Dendritic cell treated with granulocyte-macrophage colony-stimulating factor and Interleukin-4, amounts not matched to agents 40 ng/mL and 50 ng/mL, for 4 days (primary cell): ENCODE measurements at regions of chr2 and their contacts with region 1.

Region 1: DNA sequence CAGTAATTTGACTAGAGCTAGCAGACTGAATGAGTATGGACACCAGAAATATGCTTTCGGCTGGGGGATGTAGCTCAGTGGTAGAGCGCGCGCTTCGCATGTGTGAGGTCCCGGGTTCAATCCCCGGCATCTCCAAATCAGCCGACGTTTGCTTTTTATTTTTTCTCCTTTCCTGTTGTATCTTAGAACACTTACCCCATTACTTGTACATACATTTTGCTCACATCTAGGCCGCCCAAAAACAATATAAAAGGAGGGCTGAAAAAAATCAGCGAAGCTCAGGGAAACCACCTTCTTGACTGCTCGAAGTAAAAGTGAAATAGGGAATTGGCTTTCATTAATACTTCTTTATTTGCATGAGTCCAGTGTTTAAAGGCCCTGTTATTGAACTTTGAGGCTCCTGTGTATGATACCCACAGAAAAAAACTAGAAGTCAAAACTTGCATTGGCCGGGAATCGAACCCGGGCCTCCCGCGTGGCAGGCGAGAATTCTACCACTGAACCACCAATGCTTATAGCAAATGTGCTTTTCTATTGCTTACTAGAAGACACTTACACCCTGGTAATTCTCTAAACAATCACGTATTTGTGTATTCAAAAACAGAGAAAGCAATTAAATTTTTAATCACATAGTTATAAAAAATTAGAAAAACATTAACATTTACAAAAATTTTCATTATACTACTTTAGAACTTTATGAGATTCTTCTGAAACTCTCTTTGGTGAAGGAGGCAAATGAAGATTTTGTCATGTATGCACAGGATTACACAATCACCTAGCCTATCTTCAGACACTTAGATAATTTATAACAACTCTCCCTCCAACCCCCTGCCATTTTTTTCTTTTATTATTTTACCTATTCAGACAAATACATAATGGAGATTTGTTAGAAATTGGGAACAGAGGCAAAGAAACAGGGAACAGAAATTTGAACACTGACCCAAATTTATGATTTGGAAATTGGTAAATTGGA is 35.2 kb upstream of the GPD2 start:
- H3K4me3 Mint-ChIP-seq: peak overlapping the region; percentile 91
- H3K27ac Mint-ChIP-seq: peak overlapping the region; percentile 90
- H3K4me1 Mint-ChIP-seq: peaks cover 64% of the 10 kb centered on the region
- H3K27me3 Mint-ChIP-seq: no peaks in the 10 kb centered on the region

Region 2: DNA sequence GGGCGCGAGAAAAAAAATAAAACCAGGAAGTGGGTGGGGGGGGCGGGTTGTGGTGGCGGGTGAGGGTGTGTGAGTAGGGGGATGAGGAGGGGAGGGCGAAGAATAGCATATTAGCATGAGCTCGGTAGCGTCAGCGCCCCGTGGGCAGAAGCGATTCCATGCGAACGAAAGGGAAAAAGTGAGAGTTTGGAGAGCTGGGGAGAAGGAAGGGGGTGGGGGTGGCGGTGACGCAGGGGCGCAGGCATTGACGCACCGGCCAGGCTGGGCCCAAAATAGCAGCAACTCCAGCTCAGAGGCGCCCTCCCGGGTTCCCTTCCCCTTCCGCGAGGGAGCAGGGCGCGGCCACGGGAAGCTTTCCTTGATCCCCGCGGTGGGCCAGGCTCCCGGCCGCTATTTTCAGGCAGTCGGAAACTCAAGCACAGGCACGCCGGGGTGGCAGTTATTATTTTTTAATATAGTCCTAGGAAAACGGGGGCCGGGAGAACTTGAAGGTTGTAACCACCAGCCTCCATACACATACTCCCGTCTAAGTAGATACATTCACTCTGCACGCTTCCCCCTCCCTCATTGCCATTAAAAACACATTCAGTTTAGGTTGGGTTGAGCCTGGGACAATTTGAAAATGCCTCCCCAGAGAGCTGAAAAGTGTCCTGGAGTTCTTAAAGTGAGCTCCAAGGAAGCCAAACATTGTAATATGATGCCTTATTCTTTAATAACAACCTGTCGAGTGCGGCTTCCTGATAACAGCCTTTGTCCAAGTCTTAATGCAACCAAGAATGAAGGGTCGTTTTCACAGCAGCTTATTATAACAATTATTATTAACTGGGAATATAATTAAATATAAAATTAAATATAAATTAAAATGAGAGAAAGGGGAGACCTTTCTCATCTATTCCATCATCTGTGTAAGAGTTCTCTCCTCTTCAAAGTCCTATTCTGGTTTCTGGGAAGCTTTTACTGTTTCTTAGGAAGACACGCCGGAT is 66.2 kb before region 1 on chr2:
- intact Hi-C with region 1: loop called (anchors 2 kb)
- H3K4me3 Mint-ChIP-seq: peak overlapping the region; percentile 94
- H3K27ac Mint-ChIP-seq: peak overlapping the region; percentile 98
- H3K4me1 Mint-ChIP-seq: peaks cover 55% of the 10 kb centered on the region
- H3K27me3 Mint-ChIP-seq: peaks cover 10% of the 10 kb centered on the region

Region 3: DNA sequence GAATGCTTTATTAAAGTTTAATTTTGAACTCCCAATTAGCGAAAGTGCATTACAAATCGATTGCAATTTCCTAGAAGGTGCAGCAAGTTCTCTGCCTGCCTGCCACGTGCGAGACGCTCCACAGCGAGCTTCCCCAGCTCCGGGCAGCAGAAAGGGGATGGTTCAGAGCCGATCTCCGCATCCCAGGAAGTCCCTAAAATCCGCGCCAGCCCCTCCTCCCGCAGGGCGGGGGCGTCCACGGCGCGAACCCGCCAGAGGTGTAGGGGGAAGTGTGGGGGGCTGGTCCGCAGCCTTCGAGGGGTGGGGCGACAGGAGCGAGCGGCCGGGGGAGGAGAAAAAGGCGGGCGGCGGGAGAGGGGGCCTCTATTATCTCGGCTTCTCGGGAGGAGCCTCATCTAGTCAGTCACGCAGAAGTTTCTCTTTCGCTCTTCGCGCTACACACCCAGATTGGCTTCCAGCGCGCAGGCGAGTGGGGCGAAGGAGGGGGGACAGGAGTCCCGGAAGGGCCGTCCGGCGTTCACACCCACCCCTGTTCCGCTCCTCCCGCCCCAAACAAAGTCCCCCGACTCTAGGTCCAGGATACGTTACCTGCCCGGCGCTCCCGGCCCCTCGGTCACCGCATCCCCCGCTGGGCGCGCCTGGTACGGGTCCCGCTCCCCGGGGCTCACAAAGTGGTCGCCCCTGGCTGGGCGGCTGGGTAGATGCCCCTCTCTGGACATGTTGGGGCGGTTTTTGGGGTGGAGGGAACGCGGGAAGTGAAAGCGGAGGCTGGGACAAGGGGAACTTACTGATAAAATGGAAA is 59.3 kb before region 1 on chr2:
- intact Hi-C with region 1: loop called (anchors 2 kb)
- H3K4me3 Mint-ChIP-seq: peak overlapping the region; percentile 96
- H3K27ac Mint-ChIP-seq: peak overlapping the region; percentile 100
- H3K4me1 Mint-ChIP-seq: peaks cover 19% of the 10 kb centered on the region
- H3K27me3 Mint-ChIP-seq: no peaks in the 10 kb centered on the region

Region 4: GRCh38 chr2:156435715-156436496 is 34.9 kb after region 1 on chr2 and contains the start of gene GPD2:
- intact Hi-C with region 1: loop called (anchors 2 kb)
- H3K4me3 Mint-ChIP-seq: peak within 1 kb of the TSS; percentile 83
- H3K27ac Mint-ChIP-seq: peak within 1 kb of the TSS; percentile 95
- H3K4me1 Mint-ChIP-seq: peaks cover 54% of the 10 kb centered on the region
- H3K27me3 Mint-ChIP-seq: no peaks in the 10 kb centered on the region

Region 5: GRCh38 chr2:156553714-156554442 is 152.9 kb after region 1 on chr2:
- intact Hi-C with region 1: no loop called
- H3K4me3 Mint-ChIP-seq: no peak overlapping the region
- H3K27ac Mint-ChIP-seq: no peak overlapping the region
- H3K4me1 Mint-ChIP-seq: no peaks in the 10 kb centered on the region
- H3K27me3 Mint-ChIP-seq: no peaks in the 10 kb centered on the region